ENCODE measurements at regions of chr15 and their contacts with region 1.

Region 1: DNA sequence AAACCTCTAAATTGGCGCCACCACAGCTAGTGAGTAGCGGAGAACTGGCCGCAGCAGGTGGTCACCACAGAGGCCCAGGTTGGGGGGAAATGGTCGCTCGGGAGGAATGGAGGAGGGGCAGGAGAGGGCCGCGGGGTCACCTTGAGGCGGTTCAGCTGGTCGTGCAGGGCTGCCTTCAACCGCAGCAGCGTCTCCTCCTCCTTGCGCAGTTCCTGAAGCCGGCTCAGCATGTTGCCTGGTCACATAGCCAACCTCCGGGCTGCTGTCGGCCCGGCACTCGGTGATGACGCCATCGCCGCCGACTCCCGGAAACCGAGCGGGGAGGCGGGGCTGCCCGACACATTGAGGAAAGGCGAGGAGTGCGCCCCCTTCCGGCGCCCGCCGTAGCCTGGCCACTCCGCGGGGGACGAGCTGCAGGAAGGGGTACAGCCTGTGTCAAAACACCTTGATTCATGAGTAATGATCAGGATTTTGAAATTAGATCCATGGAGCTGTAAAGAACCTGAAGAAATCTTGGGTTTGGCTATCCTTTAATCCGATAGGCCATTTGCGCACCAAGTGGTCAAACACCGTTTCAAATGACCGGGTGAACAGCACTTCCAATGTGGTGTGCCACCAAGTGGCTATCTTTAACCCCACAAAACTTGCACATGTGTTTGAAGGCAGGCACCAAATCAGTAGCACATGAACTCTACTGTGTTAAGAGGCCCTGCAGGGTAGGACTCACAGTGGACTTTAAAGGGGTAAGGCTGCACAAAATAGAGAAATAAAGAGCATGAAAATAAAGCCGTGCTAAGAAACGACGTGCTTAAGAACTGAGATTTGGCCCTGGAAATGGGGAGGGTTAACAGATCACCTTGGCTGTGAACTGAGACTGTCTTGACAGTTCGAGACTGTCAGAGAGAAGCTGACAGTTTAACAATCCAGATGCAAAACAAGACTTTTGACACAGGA is at the start of gene SNAPC5:
- DNase-seq: peak in 1 of 2 donors; percentile 92
- H3K4me3 ChIP-seq: peak within 1 kb of the TSS; percentile 67 to 78
- H3K27ac ChIP-seq: peak within 1 kb of the TSS; percentile 78
- H3K4me1 ChIP-seq: peaks cover 30% of the 10 kb centered on the region
- H3K27me3 ChIP-seq: no peaks in the 10 kb centered on the region
- CTCF ChIP-seq: peak; percentile 93 to 99 (median 97)
- POLR2A ChIP-seq: peak in 1 of 2 donors; percentile 38
- total RNA-seq, gene SNAPC5: 27.0 TPM

Region 2: GRCh38 chr15:66386204-66387123 is 111.3 kb before region 1 on chr15 and contains the start of gene MAP2K1:
- intact Hi-C with region 1: loop called (anchors 1 kb)
- DNase-seq: peak; percentile 98
- H3K4me3 ChIP-seq: peak within 1 kb of the TSS; percentile 85 to 86
- H3K27ac ChIP-seq: peak within 1 kb of the TSS; percentile 95
- H3K4me1 ChIP-seq: peaks cover 46% of the 10 kb centered on the region
- H3K27me3 ChIP-seq: no peaks in the 10 kb centered on the region
- CTCF ChIP-seq: peak; percentile 23 to 63 (median 46)
- POLR2A ChIP-seq: peak in 1 of 2 donors; percentile 60
- total RNA-seq, gene MAP2K1: 23.6 TPM

Region 3: DNA sequence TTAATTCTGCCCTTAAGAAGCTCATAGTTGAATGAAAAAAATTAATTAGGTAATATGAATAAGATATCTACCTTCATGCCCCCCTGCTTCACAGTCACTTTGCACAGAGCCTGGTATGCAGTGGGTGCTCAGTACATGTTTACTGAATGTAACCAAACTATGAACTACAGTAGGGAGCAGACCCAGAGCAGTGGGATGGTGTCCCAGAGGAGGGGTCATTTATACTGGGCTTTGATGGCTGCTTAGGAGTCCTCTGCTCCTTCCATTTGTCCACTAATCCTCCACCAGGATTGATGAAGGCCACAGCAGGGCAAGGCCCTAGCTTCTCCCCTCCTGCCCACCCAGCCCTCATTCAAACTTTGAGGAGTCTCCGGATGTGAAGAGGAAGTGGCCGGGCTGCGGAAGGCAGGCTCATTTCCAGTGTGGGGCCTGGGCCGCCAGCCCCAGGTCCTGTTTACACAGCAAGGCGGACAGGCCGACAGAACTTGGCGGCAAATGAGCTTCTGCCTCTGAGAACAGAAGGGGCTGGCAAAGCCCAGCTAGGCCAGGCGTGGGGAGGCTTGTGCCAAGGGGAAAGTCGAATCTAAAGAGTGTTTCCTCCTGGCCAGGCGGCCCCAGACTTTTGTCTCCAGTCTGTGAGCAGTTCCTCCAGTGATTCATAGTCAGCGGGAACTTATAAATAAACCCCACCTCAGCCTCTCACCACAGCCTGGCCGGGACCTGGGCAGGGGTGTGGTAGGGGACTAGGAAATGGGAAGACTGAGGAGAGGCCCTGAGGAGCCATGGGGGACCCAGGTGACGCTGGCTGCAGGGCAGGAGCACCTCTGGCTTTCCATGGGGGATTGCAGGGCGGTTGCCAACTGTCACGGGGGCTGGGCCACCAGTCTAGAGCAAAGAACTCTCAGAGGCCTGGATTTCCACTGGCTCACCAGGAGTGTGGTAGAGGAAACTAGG is 119.6 kb after region 1 on chr15:
- intact Hi-C with region 1: no loop called
- DNase-seq: peak in 1 of 2 donors; percentile 90
- H3K4me3 ChIP-seq: no peak overlapping the region
- H3K27ac ChIP-seq: peak overlapping the region; percentile 83
- H3K4me1 ChIP-seq: peaks cover 42% of the 10 kb centered on the region
- H3K27me3 ChIP-seq: no peaks in the 10 kb centered on the region
- CTCF ChIP-seq: no peak
- POLR2A ChIP-seq: no peak